Activated CD8-positive, alpha-beta T cell treated with anti-CD3 and anti-CD28 coated beads for 36 hours (primary cell): ENCODE measurements at regions of chr7 and their contacts with region 1.

Region 1: GRCh38 chr7:135645296-135645904 is 16.9 kb upstream of the STMP1 start:
- DNase-seq: peak; percentile 24
- ATAC-seq: peak; percentile 80
- H3K4me3 Mint-ChIP-seq: no peak overlapping the region
- H3K27ac Mint-ChIP-seq: no peak overlapping the region
- H3K4me1 Mint-ChIP-seq: no peaks in the 10 kb centered on the region
- H3K27me3 Mint-ChIP-seq: no peaks in the 10 kb centered on the region
- CTCF ChIP-seq: peak; percentile 77

Region 2: GRCh38 chr7:135274495-135275268 is 370.7 kb before region 1 on chr7:
- CTCF ChIA-PET with region 1: interaction called, 25 read pairs
- POLR2A ChIA-PET with region 1: no interaction called
- intact Hi-C with region 1: no loop called
- DNase-seq: peak; percentile 89
- ATAC-seq: peak; percentile 92
- H3K4me3 Mint-ChIP-seq: no peak overlapping the region
- H3K27ac Mint-ChIP-seq: no peak overlapping the region
- H3K4me1 Mint-ChIP-seq: peaks cover 2% of the 10 kb centered on the region
- H3K27me3 Mint-ChIP-seq: peaks cover 2% of the 10 kb centered on the region
- CTCF ChIP-seq: peak; percentile 83

Region 3: DNA sequence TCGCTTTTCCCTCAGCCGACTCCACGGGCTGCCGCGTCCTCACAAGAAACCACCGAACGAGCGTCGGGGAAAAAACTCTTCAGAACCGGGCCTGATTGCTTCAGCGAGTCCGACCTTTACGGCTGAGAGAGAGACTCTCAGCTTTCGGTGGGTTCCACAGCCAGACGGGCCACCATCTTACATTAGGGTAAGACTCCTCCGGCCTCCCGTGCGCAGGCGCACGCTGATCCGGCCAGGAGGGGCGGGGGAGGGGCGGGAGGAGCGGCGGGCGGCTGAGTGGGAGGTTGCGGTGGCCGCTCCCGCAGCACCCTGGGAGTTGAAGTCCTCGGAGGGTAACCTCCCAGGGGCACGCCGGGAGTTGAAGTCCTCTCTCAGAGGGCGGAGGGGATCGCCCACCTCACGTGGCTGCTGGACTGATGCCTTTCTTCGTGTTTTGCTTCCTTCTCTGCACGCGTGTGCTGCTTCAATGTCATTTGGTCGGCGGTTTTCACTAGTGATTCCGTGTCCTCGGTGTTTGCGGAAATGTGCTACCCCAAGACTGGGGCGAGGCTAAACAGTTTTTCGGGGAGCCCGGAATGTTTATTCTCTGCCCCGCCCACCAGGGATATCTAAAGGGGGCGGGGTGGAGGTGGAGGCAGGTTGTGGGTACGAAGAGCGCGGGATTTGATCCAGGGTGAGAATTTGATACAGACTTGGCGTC is 135.3 kb before region 1 on chr7 and contains the start of gene CNOT4:
- CTCF ChIA-PET with region 1: interaction called, 5 read pairs
- POLR2A ChIA-PET with region 1: no interaction called
- intact Hi-C with region 1: loop called (anchors 10 kb)
- DNase-seq: peak; percentile 97
- ATAC-seq: peak; percentile 92
- H3K4me3 Mint-ChIP-seq: no peak within 1 kb of the TSS
- H3K27ac Mint-ChIP-seq: no peak within 1 kb of the TSS
- H3K4me1 Mint-ChIP-seq: peaks cover 18% of the 10 kb centered on the region
- H3K27me3 Mint-ChIP-seq: no peaks in the 10 kb centered on the region
- CTCF ChIP-seq: no peak
- total RNA-seq, gene CNOT4: 22.0 to 23.6 TPM

Region 4: DNA sequence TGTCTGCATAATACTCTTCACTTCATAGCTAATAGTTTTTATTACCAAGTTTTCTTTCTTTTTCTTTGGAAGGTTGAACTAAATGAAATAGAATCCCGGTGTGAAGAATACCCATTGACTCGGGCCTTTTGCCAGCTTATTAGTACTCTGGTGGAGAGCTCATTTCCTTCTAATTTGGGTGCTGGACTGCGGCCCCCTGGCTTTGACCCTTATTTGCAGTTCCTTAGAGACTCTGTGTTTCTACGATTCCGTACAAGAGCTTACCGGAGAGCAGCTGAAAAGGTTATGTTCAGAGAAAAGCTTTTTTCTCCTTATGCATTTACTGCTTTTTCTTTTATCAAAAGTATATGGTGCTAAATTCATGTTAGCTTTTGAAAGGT is 47.5 kb before region 1 on chr7:
- CTCF ChIA-PET with region 1: interaction called, 11 read pairs
- POLR2A ChIA-PET with region 1: no interaction called
- intact Hi-C with region 1: no loop called
- DNase-seq: no peak
- ATAC-seq: no peak
- H3K4me3 Mint-ChIP-seq: no peak overlapping the region
- H3K27ac Mint-ChIP-seq: no peak overlapping the region
- H3K4me1 Mint-ChIP-seq: no peaks in the 10 kb centered on the region
- H3K27me3 Mint-ChIP-seq: no peaks in the 10 kb centered on the region
- CTCF ChIP-seq: no peak

Region 5: GRCh38 chr7:135620980-135621850 is 24.2 kb before region 1 on chr7:
- CTCF ChIA-PET with region 1: interaction called, 33 read pairs
- POLR2A ChIA-PET with region 1: no interaction called
- intact Hi-C with region 1: no loop called
- DNase-seq: peak; percentile 41
- ATAC-seq: no peak
- H3K4me3 Mint-ChIP-seq: no peak overlapping the region
- H3K27ac Mint-ChIP-seq: no peak overlapping the region
- H3K4me1 Mint-ChIP-seq: no peaks in the 10 kb centered on the region
- H3K27me3 Mint-ChIP-seq: no peaks in the 10 kb centered on the region
- CTCF ChIP-seq: peak; percentile 90

Region 6: GRCh38 chr7:135662373-135663114 is 17.1 kb after region 1 on chr7 and contains the start of gene STMP1:
- CTCF ChIA-PET with region 1: interaction called, 32 read pairs
- POLR2A ChIA-PET with region 1: interaction called, 3 read pairs
- intact Hi-C with region 1: no loop called
- DNase-seq: peak; percentile 97
- ATAC-seq: peak; percentile 95
- H3K4me3 Mint-ChIP-seq: peak within 1 kb of the TSS; percentile 86
- H3K27ac Mint-ChIP-seq: peak within 1 kb of the TSS; percentile 91
- H3K4me1 Mint-ChIP-seq: peaks cover 41% of the 10 kb centered on the region
- H3K27me3 Mint-ChIP-seq: no peaks in the 10 kb centered on the region
- CTCF ChIP-seq: peak; percentile 59
- total RNA-seq, gene STMP1: 21.1 to 23.4 TPM